Right ventricle myocardium superior (tissue), 1 donor: ENCODE measurements at regions of chr7 and their contacts with region 1.

Region 1: DNA sequence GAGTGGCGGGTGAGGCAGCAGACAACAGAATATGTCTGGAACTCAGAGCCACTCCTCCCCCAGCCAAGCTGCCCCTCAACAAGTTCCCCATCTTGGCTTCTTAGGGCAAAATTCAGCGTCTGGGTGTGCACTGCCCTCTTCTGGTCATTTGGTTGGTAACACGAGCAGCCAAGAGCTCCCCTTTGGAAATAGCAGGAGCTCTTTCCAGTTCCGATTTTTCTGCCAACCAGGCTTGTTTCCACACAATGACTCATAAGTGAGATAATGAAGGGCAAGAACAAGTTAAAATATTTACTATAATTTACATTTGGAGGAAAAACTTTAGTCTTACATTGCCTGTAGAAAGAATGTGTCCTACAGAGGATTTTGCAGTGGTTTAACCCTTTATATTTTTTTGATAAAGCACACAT is 70.5 kb downstream of the ADCYAP1R1 start:
- DNase-seq: peak; percentile 70
- ATAC-seq: peak; percentile 91

Region 2: DNA sequence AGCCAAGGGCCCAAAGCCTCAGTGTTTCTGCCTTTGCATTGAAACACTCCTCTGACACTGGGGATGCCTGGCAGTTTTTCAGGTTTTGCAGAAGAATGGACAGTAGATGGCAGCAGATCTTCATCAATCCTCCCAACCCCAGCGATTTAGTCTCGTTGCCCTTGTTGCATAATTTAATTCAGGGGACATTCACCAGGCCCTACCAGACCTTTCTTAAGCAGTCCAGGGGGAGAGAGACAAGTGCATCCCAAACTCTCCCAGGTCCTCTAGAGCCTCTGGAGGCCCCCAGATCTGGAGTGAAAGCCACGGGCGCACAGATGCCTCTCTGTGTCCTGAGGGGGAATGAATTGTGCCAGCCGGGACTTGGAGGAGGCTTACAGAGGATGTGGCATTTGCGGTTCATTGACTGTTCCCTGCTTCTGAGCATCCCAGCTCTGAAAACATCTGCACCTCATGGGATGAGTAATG is 321.8 kb before region 1 on chr7:
- intact Hi-C with region 1: loop called (anchors 5 kb)
- DNase-seq: no peak
- ATAC-seq: peak; percentile 87

Region 3: GRCh38 chr7:30983042-30983913 is 139.4 kb before region 1 on chr7:
- intact Hi-C with region 1: loop called (anchors 2 kb)
- DNase-seq: peak; percentile 90
- ATAC-seq: peak; percentile 91

Region 4: GRCh38 chr7:31043051-31043471 is 79.6 kb before region 1 on chr7:
- intact Hi-C with region 1: no loop called
- DNase-seq: no peak
- ATAC-seq: no peak